Prostate gland (tissue), 2 donors: ENCODE measurements at regions of chr11 and their contacts with region 1.

Region 1: DNA sequence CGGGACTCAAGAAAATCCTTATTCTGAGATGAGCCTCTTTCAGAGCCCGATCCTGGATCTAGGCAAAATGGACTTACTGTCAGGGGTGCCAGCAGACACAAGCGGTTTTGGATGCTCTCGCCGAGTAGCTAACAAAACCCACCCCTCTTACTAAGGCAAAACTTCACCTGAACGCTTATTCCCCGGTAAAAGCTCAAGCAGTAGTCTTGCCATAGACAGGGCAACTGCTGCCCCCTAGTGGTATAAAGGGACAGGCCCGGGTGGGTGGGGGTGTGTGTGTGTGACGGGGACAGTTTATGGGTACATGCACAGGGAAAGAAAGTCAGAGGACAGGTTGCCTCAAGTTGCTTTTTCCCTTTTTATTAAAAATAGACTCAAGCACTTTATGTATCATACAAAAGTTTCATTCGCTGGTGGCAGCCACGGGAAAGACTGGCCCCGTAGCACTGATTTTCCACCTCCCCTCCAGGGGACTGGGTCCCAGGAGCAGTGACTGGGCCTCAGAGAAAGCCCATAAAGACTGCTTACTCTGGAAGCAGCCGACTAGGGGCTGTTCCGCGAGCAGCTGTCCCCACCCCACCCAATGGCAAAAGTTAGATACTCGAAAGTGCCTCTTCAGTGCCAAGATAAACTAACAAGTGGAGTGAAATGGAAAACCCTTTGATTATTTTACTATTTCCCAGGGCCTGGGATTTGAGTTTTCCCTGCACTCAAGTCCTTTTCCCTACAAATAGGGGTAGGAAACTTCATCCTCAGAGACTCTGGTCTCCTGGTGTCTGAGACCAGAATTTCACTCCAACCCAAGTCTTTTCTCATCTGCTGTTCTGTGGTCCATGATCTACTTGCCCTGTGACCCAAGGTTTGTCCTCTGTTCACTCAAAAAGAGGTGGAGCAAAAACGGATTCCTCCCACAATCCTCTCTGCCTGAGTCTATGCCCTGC is 4.7 kb downstream of the YPEL4 start:
- DNase-seq: peak; percentile 82
- H3K4me3 ChIP-seq: no peak overlapping the region
- H3K27ac ChIP-seq: peak overlapping the region; percentile 7 to 61
- H3K4me1 ChIP-seq: peaks cover 8% of the 10 kb centered on the region
- H3K27me3 ChIP-seq: peaks cover 5% of the 10 kb centered on the region
- CTCF ChIP-seq: peak; percentile 65 to 91 (median 74)
- POLR2A ChIP-seq: no peak

Region 2: DNA sequence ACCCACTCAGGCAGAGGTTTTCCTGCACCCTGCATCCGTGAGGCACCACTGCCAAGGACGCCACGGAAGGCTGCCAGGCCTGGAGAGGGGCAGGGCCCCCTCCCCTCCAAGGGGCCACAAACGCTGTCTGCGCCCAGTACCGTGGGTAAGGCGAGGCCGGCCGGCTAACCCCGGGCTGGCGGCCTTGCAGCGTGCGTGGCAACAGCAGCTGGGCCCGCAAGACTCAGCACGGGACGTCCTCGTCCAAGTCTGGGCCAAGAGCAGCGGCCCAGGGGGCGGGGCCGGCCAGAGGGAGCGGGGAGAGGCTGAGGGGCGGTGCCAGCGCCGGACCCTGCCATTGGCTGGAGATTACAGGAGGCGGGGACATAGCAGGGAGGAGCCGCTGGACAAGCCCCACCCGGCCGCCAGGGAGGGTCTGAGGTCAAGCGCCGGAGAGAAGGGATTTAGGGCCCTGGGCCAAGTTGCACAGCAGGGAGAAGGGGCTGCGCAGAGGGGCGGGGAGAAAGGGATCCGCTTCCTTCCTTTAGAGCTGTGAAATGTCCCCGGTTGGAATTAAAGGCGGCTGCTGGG is 145.5 kb before region 1 on chr11:
- intact Hi-C with region 1: loop called (anchors 10 kb)
- DNase-seq: peak; percentile 94
- H3K4me3 ChIP-seq: peak overlapping the region; percentile 13 to 24
- H3K27ac ChIP-seq: peak overlapping the region; percentile 74 to 86
- H3K4me1 ChIP-seq: peaks cover 14% of the 10 kb centered on the region
- H3K27me3 ChIP-seq: no peaks in the 10 kb centered on the region
- CTCF ChIP-seq: peak in 1 of 4 experiments; percentile 30
- POLR2A ChIP-seq: peak; percentile 38